ENCODE measurements at regions of chr7 and their contacts with region 1.

Region 1: GRCh38 chr7:135933509-135934188 is 43.5 kb downstream of the MTPN start:
- DNase-seq: no peak
- H3K4me3 ChIP-seq: no peak overlapping the region
- H3K27ac ChIP-seq: no peak overlapping the region
- H3K4me1 ChIP-seq: peaks cover 4% of the 10 kb centered on the region
- H3K27me3 ChIP-seq: no peaks in the 10 kb centered on the region
- CTCF ChIP-seq: no peak
- EP300 ChIP-seq: no peak
- POLR2A ChIP-seq: no peak

Region 2: GRCh38 chr7:135634191-135634878 is 299.3 kb before region 1 on chr7:
- intact Hi-C with region 1: no loop called
- DNase-seq: no peak
- H3K4me3 ChIP-seq: no peak overlapping the region
- H3K27ac ChIP-seq: no peak overlapping the region
- H3K4me1 ChIP-seq: no peaks in the 10 kb centered on the region
- H3K27me3 ChIP-seq: no peaks in the 10 kb centered on the region
- CTCF ChIP-seq: no peak
- EP300 ChIP-seq: no peak
- POLR2A ChIP-seq: no peak

Region 3: DNA sequence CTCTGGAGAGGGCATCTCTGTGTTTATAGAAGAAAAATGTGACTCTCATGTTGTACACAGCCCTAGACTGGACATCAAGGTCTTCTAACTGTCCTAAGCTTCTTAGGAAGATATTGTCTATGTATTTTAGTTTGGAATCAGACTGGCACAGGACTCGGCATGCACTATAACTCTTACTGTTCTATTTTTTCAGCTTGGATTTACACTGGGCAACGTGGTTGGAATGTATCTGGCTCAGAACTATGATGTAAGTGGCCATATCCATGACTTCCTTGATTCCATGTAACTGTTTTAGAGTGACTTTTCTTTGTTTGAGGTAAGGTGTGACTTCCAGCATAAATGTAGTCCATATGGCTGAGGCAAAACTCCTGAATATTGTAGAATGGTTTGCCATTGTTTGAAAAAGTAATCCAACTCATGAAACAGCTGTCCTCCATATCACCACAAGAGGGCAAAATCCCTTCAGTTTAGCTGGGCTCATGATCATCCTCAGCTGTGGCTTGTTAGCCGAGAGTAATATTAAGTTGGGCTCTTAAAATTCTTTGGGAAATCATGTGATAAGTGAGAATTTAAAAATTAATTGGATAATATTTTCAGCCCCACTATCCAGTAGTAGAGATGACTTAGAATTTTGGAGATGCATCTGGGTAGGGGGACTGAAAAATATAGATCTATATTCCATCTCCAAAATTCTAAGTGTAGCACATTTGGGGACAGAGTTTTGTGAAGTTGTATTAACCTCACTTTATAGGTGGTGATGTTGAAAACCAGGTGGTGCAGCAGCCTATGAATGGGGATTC is 260.9 kb before region 1 on chr7:
- intact Hi-C with region 1: no loop called
- DNase-seq: peak in 1 of 5 donors; percentile 34
- H3K4me3 ChIP-seq: no peak overlapping the region
- H3K27ac ChIP-seq: no peak overlapping the region
- H3K4me1 ChIP-seq: no peaks in the 10 kb centered on the region
- H3K27me3 ChIP-seq: no peaks in the 10 kb centered on the region
- CTCF ChIP-seq: peak; percentile 51 to 76 (median 60)
- EP300 ChIP-seq: no peak
- POLR2A ChIP-seq: no peak

Region 4: DNA sequence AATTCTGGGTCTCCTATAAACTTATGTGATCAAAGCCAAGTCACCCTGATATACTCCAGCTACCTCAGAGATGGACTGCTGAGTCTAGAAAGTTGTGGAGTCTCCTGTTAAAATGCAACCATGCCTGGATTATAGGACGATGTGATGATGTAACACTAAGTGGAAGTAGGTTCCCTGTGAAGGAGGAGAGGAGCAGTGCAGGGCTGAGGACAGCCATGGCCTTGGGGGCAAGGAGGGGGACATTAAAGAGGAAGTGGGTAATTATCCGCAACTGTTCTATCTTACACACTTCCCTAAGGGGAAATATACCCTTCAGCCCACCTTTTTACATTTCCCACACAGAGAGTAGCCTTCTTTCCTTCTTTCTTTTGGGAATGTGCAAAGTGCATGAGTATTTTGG is 20.2 kb before region 1 on chr7:
- intact Hi-C with region 1: loop called in 1 of 4 experiments (anchors 2 kb)
- DNase-seq: no peak
- H3K4me3 ChIP-seq: no peak overlapping the region
- H3K27ac ChIP-seq: no peak overlapping the region
- H3K4me1 ChIP-seq: peaks cover 4% of the 10 kb centered on the region
- H3K27me3 ChIP-seq: no peaks in the 10 kb centered on the region
- CTCF ChIP-seq: no peak
- EP300 ChIP-seq: no peak
- POLR2A ChIP-seq: no peak